ENCODE measurements at regions of chr2 and their contacts with region 1.

Region 1: DNA sequence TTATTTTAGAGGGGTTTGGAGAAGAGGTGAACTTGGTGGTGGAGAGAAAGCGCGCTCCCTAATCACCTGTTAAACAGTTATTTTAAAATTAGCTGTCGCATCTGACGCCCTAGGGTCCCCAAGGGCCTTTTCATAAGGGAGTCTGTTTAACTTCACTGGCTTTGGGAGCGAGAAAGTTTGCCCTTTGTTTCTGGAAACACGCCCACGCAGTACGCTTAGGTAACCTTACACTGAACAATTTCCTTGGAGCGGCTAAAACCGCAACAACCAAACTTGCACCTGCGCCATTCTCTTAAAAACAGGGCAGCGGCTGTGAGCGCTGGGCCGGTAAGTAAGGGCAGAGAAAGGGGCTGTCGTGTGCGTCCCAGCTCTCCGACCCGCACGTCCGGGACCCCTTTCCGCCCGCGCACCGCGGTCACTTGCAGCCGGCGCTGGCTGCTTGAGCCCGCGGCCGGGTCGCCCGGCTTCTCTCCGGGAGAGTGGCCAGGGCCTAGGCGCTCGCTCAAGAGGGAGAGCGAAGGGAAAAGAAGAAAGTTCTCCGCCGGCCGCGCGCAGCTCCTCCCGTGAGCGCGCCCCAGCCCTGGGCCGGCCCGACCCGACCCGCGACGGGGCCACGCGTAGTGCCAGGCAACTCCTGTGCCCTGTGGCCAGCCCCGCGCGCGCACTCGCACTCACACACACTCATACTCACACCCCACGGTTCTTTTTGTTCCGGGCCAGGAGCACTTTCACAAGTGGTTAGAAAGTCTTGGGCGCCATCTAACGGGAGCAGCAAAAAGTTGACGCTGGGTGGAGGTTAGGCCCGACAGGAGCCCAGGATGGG is 19.2 kb downstream of the POU3F3 start:
- DNase-seq: peak; percentile 38
- H3K4me3 Mint-ChIP-seq: peak overlapping the region; percentile 57
- H3K27ac Mint-ChIP-seq: no peak overlapping the region
- H3K4me1 Mint-ChIP-seq: peaks cover 7% of the 10 kb centered on the region
- H3K27me3 Mint-ChIP-seq: peaks cover 65% of the 10 kb centered on the region

Region 2: GRCh38 chr2:104849618-104850141 is 23.4 kb before region 1 on chr2:
- intact Hi-C with region 1: loop called (anchors 2 kb)
- DNase-seq: no peak
- H3K4me3 Mint-ChIP-seq: no peak overlapping the region
- H3K27ac Mint-ChIP-seq: no peak overlapping the region
- H3K4me1 Mint-ChIP-seq: peaks cover 19% of the 10 kb centered on the region
- H3K27me3 Mint-ChIP-seq: peaks cover 93% of the 10 kb centered on the region